Prostate gland (tissue), 2 donors: ENCODE measurements at regions of chr12 and their contacts with region 1.

Region 1: GRCh38 chr12:93894391-93895088 is 217.4 kb downstream of the CRADD start:
- DNase-seq: peak; percentile 84
- H3K4me3 ChIP-seq: no peak overlapping the region
- H3K27ac ChIP-seq: peak overlapping the region; percentile 53 to 64
- H3K4me1 ChIP-seq: peaks cover 14% of the 10 kb centered on the region
- H3K27me3 ChIP-seq: no peaks in the 10 kb centered on the region
- CTCF ChIP-seq: peak in 1 of 4 experiments; percentile 5
- POLR2A ChIP-seq: no peak

Region 2: GRCh38 chr12:93682846-93683261 is 211.7 kb before region 1 on chr12:
- intact Hi-C with region 1: loop called (anchors 5 kb)
- DNase-seq: no peak
- H3K4me3 ChIP-seq: no peak overlapping the region
- H3K27ac ChIP-seq: peak overlapping the region; percentile 45 to 73
- H3K4me1 ChIP-seq: no peaks in the 10 kb centered on the region
- H3K27me3 ChIP-seq: no peaks in the 10 kb centered on the region
- CTCF ChIP-seq: no peak
- POLR2A ChIP-seq: no peak

Region 3: GRCh38 chr12:93785262-93786010 is 109.1 kb before region 1 on chr12:
- intact Hi-C with region 1: loop called (anchors 10 kb)
- DNase-seq: peak; percentile 33
- H3K4me3 ChIP-seq: no peak overlapping the region
- H3K27ac ChIP-seq: peak overlapping the region; percentile 82 to 87
- H3K4me1 ChIP-seq: peaks cover 10% of the 10 kb centered on the region
- H3K27me3 ChIP-seq: no peaks in the 10 kb centered on the region
- CTCF ChIP-seq: no peak
- POLR2A ChIP-seq: no peak

Region 4: GRCh38 chr12:94074980-94075928 is 180.7 kb after region 1 on chr12:
- intact Hi-C with region 1: loop called (anchors 10 kb)
- DNase-seq: peak; percentile 49
- H3K4me3 ChIP-seq: no peak overlapping the region
- H3K27ac ChIP-seq: peak overlapping the region; percentile 11 to 45
- H3K4me1 ChIP-seq: no peaks in the 10 kb centered on the region
- H3K27me3 ChIP-seq: no peaks in the 10 kb centered on the region
- CTCF ChIP-seq: peak in 3 of 4 experiments; percentile 46 to 57 (median 57)
- POLR2A ChIP-seq: no peak